ENCODE measurements at regions of chr6 and their contacts with region 1.

Region 1: GRCh38 chr6:10733863-10734262 is 11.0 kb downstream of the TMEM14C start:
- DNase-seq: no peak
- H3K4me3 ChIP-seq: no peak overlapping the region
- H3K4me3 Mint-ChIP-seq: peak overlapping the region; percentile 15
- H3K27ac Mint-ChIP-seq: peak overlapping the region; percentile 66
- H3K4me1 ChIP-seq: peaks cover 25% of the 10 kb centered on the region
- H3K4me1 Mint-ChIP-seq: peaks cover 13% of the 10 kb centered on the region
- H3K27me3 ChIP-seq: no peaks in the 10 kb centered on the region
- H3K27me3 Mint-ChIP-seq: no peaks in the 10 kb centered on the region
- CTCF ChIP-seq: no peak

Region 2: DNA sequence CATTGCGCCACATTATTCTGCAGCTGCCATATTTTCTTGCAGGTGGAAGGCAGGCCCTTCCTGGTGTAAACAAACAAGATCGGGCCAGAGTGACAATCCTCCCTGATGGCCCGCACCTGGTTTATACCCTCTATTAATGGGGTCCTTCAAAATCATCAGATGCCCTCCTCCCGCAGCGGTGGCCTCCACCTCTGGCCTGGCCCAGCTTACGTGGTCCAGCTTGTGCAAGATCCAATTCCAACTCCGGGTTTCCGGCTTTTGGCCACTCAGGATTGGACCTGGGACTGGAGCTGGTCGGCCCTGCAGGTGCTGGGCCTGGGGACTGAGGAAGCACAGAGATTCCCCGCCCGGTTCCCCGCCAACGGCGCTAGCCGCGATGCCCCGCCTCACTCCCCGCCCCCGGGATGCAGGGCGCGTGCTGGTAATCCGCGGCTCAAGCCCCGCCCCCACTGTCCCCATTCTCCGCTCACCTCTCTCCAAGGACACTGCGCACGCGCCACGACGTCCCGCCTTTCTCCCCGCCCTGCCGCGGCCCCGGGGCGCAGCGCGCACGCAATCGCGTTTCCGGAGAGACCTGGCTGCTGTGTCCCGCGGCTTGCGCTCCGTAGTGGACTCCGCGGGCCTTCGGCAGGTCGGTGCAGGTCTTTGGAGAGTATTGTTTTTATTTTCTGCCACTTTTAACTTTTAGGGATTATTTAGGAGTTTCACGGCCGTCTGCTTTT is 13.5 kb after region 1 on chr6 and contains the start of gene TMEM14B:
- CTCF ChIA-PET with region 1: no interaction called
- POLR2A ChIA-PET with region 1: interaction called, 3 read pairs
- intact Hi-C with region 1: loop called (anchors 1 kb)
- DNase-seq: peak; percentile 98 to 100
- H3K4me3 ChIP-seq: peak within 1 kb of the TSS; percentile 79
- H3K4me3 Mint-ChIP-seq: peak within 1 kb of the TSS; percentile 77
- H3K27ac Mint-ChIP-seq: peak within 1 kb of the TSS; percentile 94
- H3K4me1 ChIP-seq: peaks cover 23% of the 10 kb centered on the region
- H3K4me1 Mint-ChIP-seq: peaks cover 20% of the 10 kb centered on the region
- H3K27me3 ChIP-seq: no peaks in the 10 kb centered on the region
- H3K27me3 Mint-ChIP-seq: no peaks in the 10 kb centered on the region
- CTCF ChIP-seq: no peak
- total RNA-seq, gene TMEM14B: 104 and 105 TPM in 2 replicates